Activated CD8-positive, alpha-beta T cell treated with anti-CD3 and anti-CD28 coated beads for 36 hours (primary cell): ENCODE measurements at regions of chrX and their contacts with region 1.

Region 1: DNA sequence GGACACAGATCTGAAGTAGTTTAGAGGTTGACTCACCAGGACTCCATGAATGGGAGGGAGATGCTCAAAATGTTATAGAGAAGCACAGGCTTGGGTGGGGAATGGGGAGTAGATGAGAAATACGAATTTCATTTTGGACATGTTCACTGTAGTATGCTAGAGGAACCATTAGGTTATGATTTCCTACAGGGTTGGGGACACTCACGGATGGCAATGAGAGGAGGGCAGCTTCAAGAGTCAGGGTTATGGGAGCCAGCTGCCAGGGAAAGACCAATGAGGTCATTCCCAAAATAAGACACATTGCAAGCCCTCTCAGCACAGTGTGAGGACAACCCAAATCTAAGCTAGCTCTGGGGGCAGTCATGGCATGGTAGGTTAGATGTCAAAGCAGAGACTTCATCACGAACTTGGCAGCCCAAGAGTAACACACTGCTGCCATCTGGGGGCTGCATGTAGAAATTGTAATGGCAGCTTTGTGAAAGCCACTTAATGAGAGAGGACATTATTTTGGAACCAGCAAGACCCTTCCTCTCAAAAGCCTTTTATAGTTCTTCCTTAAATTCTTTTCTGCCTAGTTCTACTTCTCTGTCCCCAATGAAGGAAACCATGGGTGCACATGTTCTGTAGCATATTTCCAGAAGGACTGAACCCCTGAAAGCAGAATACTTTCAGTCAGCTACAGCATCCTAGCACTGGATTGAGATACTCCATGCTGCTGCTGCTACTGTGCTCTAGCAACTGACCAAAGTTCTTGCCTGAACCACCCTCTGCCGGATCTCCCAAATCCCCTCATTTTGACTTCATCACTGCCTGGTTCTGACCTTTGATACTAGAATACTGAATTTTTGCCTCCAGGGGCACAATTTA is 16.2 kb upstream of the ZCCHC12 start:
- DNase-seq: peak; percentile 36
- ATAC-seq: peak; percentile 47
- H3K4me3 Mint-ChIP-seq: no peak overlapping the region
- H3K27ac Mint-ChIP-seq: no peak overlapping the region
- H3K4me1 Mint-ChIP-seq: no peaks in the 10 kb centered on the region
- H3K27me3 Mint-ChIP-seq: peaks cover 1% of the 10 kb centered on the region
- CTCF ChIP-seq: peak; percentile 29

Region 2: GRCh38 chrX:118644378-118644777 is 163.0 kb before region 1 on chrX:
- CTCF ChIA-PET with region 1: interaction called, 7 read pairs
- POLR2A ChIA-PET with region 1: no interaction called
- intact Hi-C with region 1: loop called (anchors 10 kb)
- DNase-seq: no peak
- ATAC-seq: no peak
- H3K4me3 Mint-ChIP-seq: no peak overlapping the region
- H3K27ac Mint-ChIP-seq: no peak overlapping the region
- H3K4me1 Mint-ChIP-seq: peaks cover 2% of the 10 kb centered on the region
- H3K27me3 Mint-ChIP-seq: no peaks in the 10 kb centered on the region
- CTCF ChIP-seq: no peak

Region 3: DNA sequence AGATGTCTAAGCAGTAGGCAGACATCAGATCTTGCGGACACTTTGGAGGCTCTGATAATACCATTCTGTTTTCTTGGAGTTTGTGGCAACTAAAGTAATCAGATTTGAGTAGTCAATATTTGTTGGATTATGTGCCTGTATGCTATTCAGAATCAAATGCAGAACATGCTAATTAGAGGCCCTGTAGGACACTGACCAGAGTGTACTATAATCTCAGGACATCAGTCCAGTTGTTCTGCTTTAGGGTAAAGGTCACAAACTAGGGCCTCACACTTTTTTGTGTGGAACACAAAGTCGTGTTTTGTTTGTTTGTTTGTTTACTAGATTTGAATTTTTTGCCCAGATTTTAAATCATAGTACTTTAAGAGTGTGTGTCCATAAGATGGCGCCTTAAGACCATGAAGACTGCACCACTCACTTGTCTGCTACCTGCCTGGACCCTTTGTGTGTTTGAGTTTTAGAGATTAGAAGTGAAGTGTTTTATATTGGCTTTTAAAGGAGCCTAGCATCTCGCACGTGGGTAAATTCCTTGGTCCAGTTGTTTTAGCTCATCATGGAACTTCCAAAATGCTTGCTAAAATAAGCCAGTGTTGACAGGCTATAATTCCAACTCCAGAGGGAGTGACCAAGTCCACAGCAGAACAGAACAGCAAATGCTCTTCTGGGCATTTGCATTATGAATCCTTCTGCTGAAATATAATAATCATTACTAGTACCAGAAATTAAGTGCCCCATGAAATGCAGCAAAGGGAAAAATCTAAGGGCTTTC is 45.3 kb before region 1 on chrX:
- CTCF ChIA-PET with region 1: interaction called, 4 read pairs
- POLR2A ChIA-PET with region 1: no interaction called
- intact Hi-C with region 1: loop called (anchors 5 kb)
- DNase-seq: peak; percentile 2
- ATAC-seq: no peak
- H3K4me3 Mint-ChIP-seq: no peak overlapping the region
- H3K27ac Mint-ChIP-seq: no peak overlapping the region
- H3K4me1 Mint-ChIP-seq: no peaks in the 10 kb centered on the region
- H3K27me3 Mint-ChIP-seq: no peaks in the 10 kb centered on the region
- CTCF ChIP-seq: no peak